MCF 10A (cell line): ENCODE measurements at regions of chr1 and their contacts with region 1.

Region 1: GRCh38 chr1:200510228-200510623 is 100.4 kb upstream of the ZNF281 start:
- DNase-seq: peak; percentile 98
- H3K4me3 Mint-ChIP-seq: no peak overlapping the region
- H3K27ac Mint-ChIP-seq: no peak overlapping the region
- H3K4me1 Mint-ChIP-seq: peaks cover 11% of the 10 kb centered on the region
- H3K27me3 Mint-ChIP-seq: peaks cover 24% of the 10 kb centered on the region
- CTCF ChIP-seq: peak; percentile 99

Region 2: DNA sequence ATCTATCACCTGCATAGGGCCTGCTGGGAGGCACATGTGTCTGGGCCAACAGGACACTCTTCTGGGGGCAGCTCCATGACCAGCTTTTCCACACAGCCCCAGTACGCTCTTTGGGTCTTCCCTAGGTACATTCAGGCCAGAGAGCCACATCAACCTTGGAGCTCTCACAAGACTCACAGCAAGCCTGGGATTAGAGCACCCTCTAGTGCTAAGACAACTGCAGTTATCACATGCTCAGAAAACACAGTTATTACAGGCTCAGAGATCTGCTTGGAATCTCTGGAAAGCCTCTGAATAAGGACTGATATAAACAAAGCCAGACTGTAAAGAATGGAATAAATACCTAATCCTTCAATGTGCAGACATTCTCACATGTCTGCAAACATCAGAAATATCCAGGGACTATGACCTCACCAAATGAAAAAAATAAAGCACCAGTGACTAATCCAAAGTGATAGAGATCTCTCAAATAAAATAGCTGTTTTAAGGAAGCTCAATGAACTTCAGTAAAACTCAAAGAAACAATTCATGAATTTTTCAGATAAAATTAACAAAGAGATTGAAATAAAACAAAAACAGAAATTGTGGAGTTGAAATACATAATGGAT is 1046.6 kb before region 1 on chr1:
- CTCF ChIA-PET with region 1: no interaction called
- POLR2A ChIA-PET with region 1: interaction called, 3 read pairs
- intact Hi-C with region 1: loop called (anchors 1 kb)
- DNase-seq: peak; percentile 80
- H3K4me3 Mint-ChIP-seq: no peak overlapping the region
- H3K27ac Mint-ChIP-seq: no peak overlapping the region
- H3K4me1 Mint-ChIP-seq: no peaks in the 10 kb centered on the region
- H3K27me3 Mint-ChIP-seq: no peaks in the 10 kb centered on the region
- CTCF ChIP-seq: peak; percentile 79

Region 3: DNA sequence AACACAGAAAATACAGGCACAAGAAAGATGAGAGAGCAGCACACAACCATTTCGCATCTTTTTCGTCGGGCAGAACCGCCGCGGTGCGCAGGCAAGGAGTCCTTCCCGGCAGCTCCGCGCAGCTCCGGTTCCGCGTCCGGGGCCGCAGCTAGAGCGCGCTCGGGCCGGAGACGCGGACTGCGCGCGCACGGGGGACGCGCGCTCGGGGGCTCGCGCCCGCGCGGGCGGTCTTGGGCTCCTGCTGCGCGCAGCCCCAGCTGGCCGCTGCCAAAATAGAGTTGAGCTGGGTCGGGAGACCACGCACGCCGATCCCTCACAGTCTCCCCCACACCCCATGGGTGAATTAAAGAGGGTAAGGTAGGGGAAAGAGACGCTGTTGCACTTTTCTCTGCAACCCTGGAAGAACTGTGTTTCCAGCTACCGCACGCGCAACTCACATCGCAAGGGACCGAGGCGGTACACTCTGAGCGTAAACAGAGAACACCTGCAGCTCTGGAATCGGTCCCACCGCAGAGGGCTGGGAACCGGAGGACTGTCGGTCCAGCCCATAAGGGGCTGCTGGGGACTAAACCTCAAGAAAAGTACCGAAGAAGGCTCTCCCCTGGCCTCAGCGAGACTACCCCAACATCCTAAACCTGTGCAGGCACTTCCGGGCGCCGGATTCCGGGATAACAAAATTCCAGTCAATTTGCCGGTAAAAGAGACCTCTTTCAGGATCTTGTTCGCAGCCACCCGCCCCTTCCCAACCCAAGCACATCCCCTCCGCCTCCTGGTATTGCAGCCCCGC is 481.0 kb before region 1 on chr1:
- CTCF ChIA-PET with region 1: no interaction called
- POLR2A ChIA-PET with region 1: no interaction called
- intact Hi-C with region 1: loop called (anchors 5 kb)
- DNase-seq: peak; percentile 65
- H3K4me3 Mint-ChIP-seq: peak overlapping the region; percentile 77
- H3K27ac Mint-ChIP-seq: peak overlapping the region; percentile 24
- H3K4me1 Mint-ChIP-seq: peaks cover 6% of the 10 kb centered on the region
- H3K27me3 Mint-ChIP-seq: no peaks in the 10 kb centered on the region
- CTCF ChIP-seq: no peak

Region 4: GRCh38 chr1:200279810-200280411 is 230.3 kb before region 1 on chr1:
- CTCF ChIA-PET with region 1: interaction called, 25 read pairs
- POLR2A ChIA-PET with region 1: no interaction called
- intact Hi-C with region 1: loop called (anchors 1 kb)
- DNase-seq: peak; percentile 89
- H3K4me3 Mint-ChIP-seq: no peak overlapping the region
- H3K27ac Mint-ChIP-seq: no peak overlapping the region
- H3K4me1 Mint-ChIP-seq: peaks cover 7% of the 10 kb centered on the region
- H3K27me3 Mint-ChIP-seq: no peaks in the 10 kb centered on the region
- CTCF ChIP-seq: peak; percentile 88

Region 5: DNA sequence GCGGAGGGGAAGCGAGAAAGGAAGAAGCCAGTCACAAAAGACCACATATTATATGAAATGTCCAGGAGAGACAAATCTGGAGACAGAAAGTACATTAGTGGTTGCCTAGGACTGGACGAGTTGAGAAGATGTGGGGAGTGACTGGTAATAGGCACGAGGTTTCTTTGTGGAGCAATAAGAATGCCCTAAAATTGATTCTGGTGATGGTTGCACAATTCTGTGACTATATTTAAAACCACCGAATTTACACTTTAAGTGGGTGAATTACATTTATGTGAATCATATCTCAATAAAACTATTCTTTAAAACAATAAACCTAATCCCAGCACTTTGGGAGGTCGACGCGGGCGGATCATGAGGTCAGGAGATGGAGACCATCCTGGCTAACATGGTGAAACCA is 163.5 kb before region 1 on chr1:
- CTCF ChIA-PET with region 1: no interaction called
- POLR2A ChIA-PET with region 1: no interaction called
- intact Hi-C with region 1: no loop called
- DNase-seq: peak; percentile 52
- H3K4me3 Mint-ChIP-seq: no peak overlapping the region
- H3K27ac Mint-ChIP-seq: no peak overlapping the region
- H3K4me1 Mint-ChIP-seq: peaks cover 12% of the 10 kb centered on the region
- H3K27me3 Mint-ChIP-seq: no peaks in the 10 kb centered on the region
- CTCF ChIP-seq: no peak

Region 6: DNA sequence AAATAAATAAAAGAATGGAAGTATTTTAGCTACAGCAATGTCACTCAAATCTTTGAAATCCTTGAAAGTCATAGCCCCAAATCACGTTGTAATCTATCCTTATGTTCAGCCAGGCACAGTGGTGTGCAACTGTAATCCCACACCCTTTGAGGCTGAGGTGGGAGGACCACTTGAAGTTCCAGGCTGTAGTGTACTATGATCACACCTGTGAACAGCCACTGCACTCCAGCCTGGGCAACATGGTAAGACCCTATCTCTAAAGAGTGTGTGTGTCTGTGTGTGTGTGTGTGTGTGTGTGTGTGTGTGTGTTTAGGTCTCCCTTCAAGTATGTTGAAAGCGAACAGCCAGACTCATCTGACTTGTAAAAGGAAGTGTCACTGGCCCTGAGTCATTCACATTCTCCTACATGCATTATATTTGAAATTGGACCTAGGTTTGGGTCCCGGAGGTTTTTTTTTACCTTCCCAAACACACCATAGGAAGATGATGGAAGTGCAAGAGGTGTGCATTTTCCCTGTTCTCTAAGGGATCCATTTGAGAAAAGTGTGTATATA is 150.5 kb before region 1 on chr1:
- CTCF ChIA-PET with region 1: no interaction called
- POLR2A ChIA-PET with region 1: no interaction called
- intact Hi-C with region 1: no loop called
- DNase-seq: peak; percentile 57
- H3K4me3 Mint-ChIP-seq: no peak overlapping the region
- H3K27ac Mint-ChIP-seq: no peak overlapping the region
- H3K4me1 Mint-ChIP-seq: peaks cover 7% of the 10 kb centered on the region
- H3K27me3 Mint-ChIP-seq: no peaks in the 10 kb centered on the region
- CTCF ChIP-seq: no peak

Region 7: DNA sequence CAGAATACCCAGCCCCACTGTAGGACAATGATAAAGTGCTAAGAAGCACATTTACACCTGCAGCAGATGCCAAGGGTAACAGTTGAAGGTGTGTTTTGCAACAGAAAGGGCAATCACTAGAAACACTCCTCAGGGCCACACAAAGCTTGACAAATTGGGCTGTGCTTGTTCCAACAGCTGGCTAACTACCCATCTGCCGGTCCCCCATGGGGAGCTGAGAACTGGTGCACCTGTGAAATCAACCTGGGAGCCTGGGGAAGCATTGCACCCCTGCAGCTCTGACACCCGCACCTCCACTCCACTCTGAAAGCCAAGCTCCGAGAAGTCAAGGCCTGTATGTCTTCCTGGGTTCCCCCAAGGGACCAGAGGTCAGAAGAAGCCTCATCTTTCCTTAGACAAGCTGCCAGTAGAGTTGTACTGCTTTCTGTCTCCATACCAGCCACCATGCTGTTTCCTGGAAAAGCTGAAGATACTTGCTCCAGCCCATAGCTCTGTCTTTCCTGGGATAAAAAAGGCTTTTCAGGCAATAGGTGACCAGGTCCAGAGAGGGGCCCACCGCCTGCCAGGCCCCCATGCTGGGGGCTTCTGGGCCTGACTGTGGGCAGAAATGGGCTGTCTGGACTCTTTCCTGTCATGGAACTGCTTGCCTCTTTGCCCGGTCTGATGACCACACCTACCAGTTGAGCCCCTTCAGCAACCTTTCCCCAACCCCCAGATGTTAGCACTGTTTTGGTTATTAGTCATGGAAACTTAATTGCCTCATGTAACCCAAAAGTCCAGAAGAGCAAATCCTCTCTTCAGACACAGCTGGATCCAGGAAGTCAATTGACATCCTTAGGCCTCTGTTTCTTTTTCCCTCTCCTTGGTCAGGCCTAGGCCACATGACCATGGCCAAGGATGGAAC is 16.7 kb after region 1 on chr1:
- CTCF ChIA-PET with region 1: interaction called, 20 read pairs
- POLR2A ChIA-PET with region 1: no interaction called
- intact Hi-C with region 1: no loop called
- DNase-seq: no peak
- H3K4me3 Mint-ChIP-seq: no peak overlapping the region
- H3K27ac Mint-ChIP-seq: no peak overlapping the region
- H3K4me1 Mint-ChIP-seq: no peaks in the 10 kb centered on the region
- H3K27me3 Mint-ChIP-seq: no peaks in the 10 kb centered on the region
- CTCF ChIP-seq: no peak

Region 8: DNA sequence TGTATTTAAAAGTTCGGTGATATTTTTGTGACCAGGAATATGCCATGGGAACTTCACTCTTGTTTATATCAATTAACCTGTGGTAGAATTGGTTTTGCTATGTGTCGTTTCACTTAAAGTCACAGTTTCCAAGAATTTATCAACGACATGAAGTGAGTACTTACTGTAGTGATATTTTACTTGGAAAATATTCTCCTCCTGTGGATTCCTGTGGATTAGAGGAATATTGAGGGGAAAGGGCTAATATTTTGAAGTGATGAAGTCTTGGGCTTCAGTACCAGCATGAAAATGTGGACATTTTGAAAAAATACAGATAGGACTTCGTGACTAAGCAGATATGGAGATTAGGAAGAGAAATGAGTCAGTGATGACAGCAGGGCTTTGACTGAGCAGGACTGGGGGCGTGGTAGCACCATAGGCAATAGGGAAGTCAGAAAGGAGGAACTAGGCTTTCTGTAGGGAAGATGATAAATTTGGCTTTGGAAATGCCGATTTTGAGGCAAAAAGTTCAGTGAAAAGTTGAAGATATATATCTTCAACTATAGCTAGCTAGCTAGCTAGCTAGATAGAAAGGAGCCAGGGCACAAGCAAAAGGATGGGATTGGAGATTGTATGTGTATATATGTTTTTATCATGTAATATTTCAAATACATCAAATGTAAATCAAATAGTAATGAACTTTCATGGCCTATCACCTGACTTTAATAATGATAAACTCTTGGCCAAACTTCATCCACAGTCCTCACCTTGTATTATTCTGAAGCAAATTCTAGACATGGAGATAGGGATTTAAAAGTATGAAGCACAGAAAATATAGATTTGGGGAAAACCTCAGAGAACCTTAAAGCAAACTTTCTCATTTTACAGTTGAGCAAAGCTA is 129.8 kb after region 1 on chr1:
- CTCF ChIA-PET with region 1: no interaction called
- POLR2A ChIA-PET with region 1: no interaction called
- intact Hi-C with region 1: no loop called
- DNase-seq: peak; percentile 95
- H3K4me3 Mint-ChIP-seq: peak overlapping the region; percentile 4
- H3K27ac Mint-ChIP-seq: peak overlapping the region; percentile 55
- H3K4me1 Mint-ChIP-seq: peaks cover 20% of the 10 kb centered on the region
- H3K27me3 Mint-ChIP-seq: no peaks in the 10 kb centered on the region
- CTCF ChIP-seq: no peak